ENCODE measurements at regions of chr2 and their contacts with region 1.

Region 1: DNA sequence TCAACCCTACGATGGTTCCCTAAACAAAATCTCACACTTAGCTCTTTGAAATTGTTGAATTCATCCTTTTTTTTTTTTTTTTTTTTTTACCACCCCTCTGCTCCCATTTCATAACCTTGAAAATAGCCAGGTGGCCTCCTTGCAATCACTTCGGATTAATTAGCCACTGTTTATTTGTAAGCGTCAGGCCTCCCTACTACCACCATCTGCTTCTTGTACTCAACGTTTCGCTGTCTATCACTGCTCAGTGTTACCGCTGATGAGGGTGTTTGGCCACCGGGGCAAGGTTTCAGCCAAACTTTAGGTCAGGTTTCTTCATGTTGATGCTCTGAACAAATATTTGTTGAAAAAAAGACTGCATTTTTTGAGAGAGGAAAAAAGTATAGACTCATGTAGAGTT is 183.2 kb downstream of the EPHA4 start:
- DNase-seq: no peak
- ATAC-seq: no peak
- H3K4me3 ChIP-seq: no peak overlapping the region
- H3K27ac ChIP-seq: no peak overlapping the region
- H3K4me1 ChIP-seq: no peaks in the 10 kb centered on the region
- H3K27me3 ChIP-seq: no peaks in the 10 kb centered on the region
- CTCF ChIP-seq: no peak

Region 2: GRCh38 chr2:219829667-219830352 is 1559.1 kb before region 1 on chr2:
- CTCF ChIA-PET with region 1: interaction called, 12 read pairs
- POLR2A ChIA-PET with region 1: no interaction called
- in situ Hi-C with region 1: no loop called
- intact Hi-C with region 1: no loop called
- DNase-seq: no peak
- ATAC-seq: no peak
- H3K4me3 ChIP-seq: no peak overlapping the region
- H3K27ac ChIP-seq: no peak overlapping the region
- H3K4me1 ChIP-seq: no peaks in the 10 kb centered on the region
- H3K27me3 ChIP-seq: no peaks in the 10 kb centered on the region
- CTCF ChIP-seq: no peak

Region 3: GRCh38 chr2:221374234-221374633 is 14.7 kb before region 1 on chr2:
- CTCF ChIA-PET with region 1: interaction called, 11 read pairs
- POLR2A ChIA-PET with region 1: no interaction called
- in situ Hi-C with region 1: no loop called
- intact Hi-C with region 1: no loop called
- DNase-seq: no peak
- ATAC-seq: no peak
- H3K4me3 ChIP-seq: no peak overlapping the region
- H3K27ac ChIP-seq: no peak overlapping the region
- H3K4me1 ChIP-seq: no peaks in the 10 kb centered on the region
- H3K27me3 ChIP-seq: no peaks in the 10 kb centered on the region
- CTCF ChIP-seq: no peak

Measured in Panc1 (cell line).